H1 (cell line): ENCODE measurements at regions of chr14 and their contacts with region 1.

Region 1: GRCh38 chr14:23694085-23694975 is 58.2 kb downstream of the DHRS2 start:
- DNase-seq: peak in 1 of 2 experiments; percentile 52
- H3K4me3 ChIP-seq: peak overlapping the region in 2 of 4 experiments; percentile 19 to 51; a peak in 3 of 8 replicates
- H3K27ac ChIP-seq: no peak overlapping the region
- H3K4me1 ChIP-seq: peaks cover 11 to 18% (median 14%) of the 10 kb centered on the region in 4 experiments; a peak in 6 of 7 replicates
- H3K27me3 ChIP-seq: no peaks in the 10 kb centered on the region; a peak in 1 of 7 replicates
- CTCF ChIP-seq: no peak
- EP300 ChIP-seq: no peak
- POLR2A ChIP-seq: peak in 1 of 2 experiments; percentile 51; a peak in 1 of 3 replicates
- RAD21 ChIP-seq: no peak

Region 2: GRCh38 chr14:23681337-23681736 is 13.0 kb before region 1 on chr14:
- CTCF ChIA-PET with region 1: interaction called, 5 read pairs
- POLR2A ChIA-PET with region 1: interaction called, 28 read pairs
- DNase-seq: no peak
- H3K4me3 ChIP-seq: no peak overlapping the region
- H3K27ac ChIP-seq: no peak overlapping the region
- H3K4me1 ChIP-seq: no peaks in the 10 kb centered on the region
- H3K27me3 ChIP-seq: no peaks in the 10 kb centered on the region
- CTCF ChIP-seq: no peak
- EP300 ChIP-seq: no peak
- POLR2A ChIP-seq: no peak
- RAD21 ChIP-seq: no peak

Region 3: GRCh38 chr14:23953464-23954278 is 259.3 kb after region 1 on chr14 and contains the start of gene DHRS4:
- CTCF ChIA-PET with region 1: no interaction called
- POLR2A ChIA-PET with region 1: no interaction called
- DNase-seq: peak; percentile 59 to 86
- H3K4me3 ChIP-seq: peak within 1 kb of the TSS; percentile 72 to 90 (median 86)
- H3K27ac ChIP-seq: peak within 1 kb of the TSS; percentile 69
- H3K4me1 ChIP-seq: peaks cover 0 to 7% (median under 1%) of the 10 kb centered on the region in 4 experiments; a peak in 2 of 7 replicates
- H3K27me3 ChIP-seq: no peaks in the 10 kb centered on the region
- CTCF ChIP-seq: peak; percentile 79 to 89 (median 87)
- EP300 ChIP-seq: no peak
- POLR2A ChIP-seq: peak in 1 of 2 experiments; percentile 78; a peak in 2 of 3 replicates
- RAD21 ChIP-seq: peak; percentile 71 to 82
- total RNA-seq, gene DHRS4: 16.2 and 19.2 TPM in 2 replicates